ENCODE measurements at regions of chr6 and their contacts with region 1.

Region 1: GRCh38 chr6:134097114-134097707 is 44.8 kb upstream of the SLC2A12 start:
- DNase-seq: peak in 1 of 2 experiments; percentile 71
- H3K4me3 ChIP-seq: no peak overlapping the region
- H3K27ac ChIP-seq: no peak overlapping the region
- H3K4me1 ChIP-seq: no peaks in the 10 kb centered on the region
- H3K27me3 ChIP-seq: peaks cover 0 to under 1% (median 0%) of the 10 kb centered on the region in 4 experiments; a peak in 1 of 7 replicates
- CTCF ChIP-seq: peak in 2 of 3 experiments; percentile 63 to 69; a peak in 3 of 4 replicates
- EP300 ChIP-seq: no peak
- POLR2A ChIP-seq: no peak
- RAD21 ChIP-seq: peak; percentile 96 to 98

Region 2: DNA sequence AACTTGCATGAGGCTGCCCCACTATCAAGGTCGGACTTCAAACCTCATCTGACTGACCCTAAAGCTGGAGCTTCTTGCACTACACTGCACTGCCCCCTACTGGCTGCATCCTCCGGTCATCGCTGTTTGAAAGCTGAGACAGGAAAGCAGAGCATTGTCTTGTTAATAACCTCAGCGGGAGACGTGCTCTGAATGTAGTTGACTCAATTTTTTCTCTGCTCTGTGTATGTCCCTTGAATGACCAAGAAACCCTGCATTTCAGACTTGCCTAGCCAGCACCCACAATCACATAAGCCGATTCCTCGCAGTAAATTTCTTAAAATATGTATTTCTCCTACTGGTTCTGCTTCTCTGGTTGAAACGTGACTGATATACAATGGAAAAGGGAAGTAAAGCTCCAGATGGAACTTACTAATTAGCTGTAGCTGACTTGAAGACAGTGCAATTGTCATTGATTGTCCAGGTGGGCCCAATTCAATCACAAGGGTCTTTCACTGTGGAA is 180.5 kb before region 1 on chr6:
- CTCF ChIA-PET with region 1: interaction called, 374 read pairs
- POLR2A ChIA-PET with region 1: no interaction called
- DNase-seq: peak; percentile 96 to 99
- H3K4me3 ChIP-seq: peak overlapping the region in 3 of 4 experiments; percentile 4 to 46 (median 12); a peak in 4 of 8 replicates
- H3K27ac ChIP-seq: no peak overlapping the region; the same call in 1 of the 2 replicates
- H3K4me1 ChIP-seq: peaks cover 0 to 7% (median 3%) of the 10 kb centered on the region in 4 experiments; a peak in 6 of 7 replicates
- H3K27me3 ChIP-seq: no peaks in the 10 kb centered on the region
- CTCF ChIP-seq: peak; percentile 86 to 97 (median 87)
- EP300 ChIP-seq: no peak
- POLR2A ChIP-seq: no peak
- RAD21 ChIP-seq: peak; percentile 96 to 98

Region 3: GRCh38 chr6:133952815-133953633 is 144.2 kb before region 1 on chr6 and contains the start of gene TBPL1:
- CTCF ChIA-PET with region 1: interaction called, 20 read pairs
- POLR2A ChIA-PET with region 1: no interaction called
- DNase-seq: peak; percentile 86 to 93
- H3K4me3 ChIP-seq: peak within 1 kb of the TSS; percentile 81 to 92 (median 88)
- H3K27ac ChIP-seq: peak within 1 kb of the TSS; percentile 74; the same call in 1 of the 2 replicates
- H3K4me1 ChIP-seq: peaks cover 0 to 10% (median 3%) of the 10 kb centered on the region in 4 experiments; a peak in 6 of 7 replicates
- H3K27me3 ChIP-seq: no peaks in the 10 kb centered on the region; a peak in 1 of 7 replicates
- CTCF ChIP-seq: no peak
- EP300 ChIP-seq: peak in 1 of 2 experiments; percentile 52; a peak in 1 of 3 replicates
- POLR2A ChIP-seq: peak; percentile 57 to 93
- RAD21 ChIP-seq: no peak
- total RNA-seq, gene TBPL1: 66.3 and 67.0 TPM in 2 replicates

Region 4: DNA sequence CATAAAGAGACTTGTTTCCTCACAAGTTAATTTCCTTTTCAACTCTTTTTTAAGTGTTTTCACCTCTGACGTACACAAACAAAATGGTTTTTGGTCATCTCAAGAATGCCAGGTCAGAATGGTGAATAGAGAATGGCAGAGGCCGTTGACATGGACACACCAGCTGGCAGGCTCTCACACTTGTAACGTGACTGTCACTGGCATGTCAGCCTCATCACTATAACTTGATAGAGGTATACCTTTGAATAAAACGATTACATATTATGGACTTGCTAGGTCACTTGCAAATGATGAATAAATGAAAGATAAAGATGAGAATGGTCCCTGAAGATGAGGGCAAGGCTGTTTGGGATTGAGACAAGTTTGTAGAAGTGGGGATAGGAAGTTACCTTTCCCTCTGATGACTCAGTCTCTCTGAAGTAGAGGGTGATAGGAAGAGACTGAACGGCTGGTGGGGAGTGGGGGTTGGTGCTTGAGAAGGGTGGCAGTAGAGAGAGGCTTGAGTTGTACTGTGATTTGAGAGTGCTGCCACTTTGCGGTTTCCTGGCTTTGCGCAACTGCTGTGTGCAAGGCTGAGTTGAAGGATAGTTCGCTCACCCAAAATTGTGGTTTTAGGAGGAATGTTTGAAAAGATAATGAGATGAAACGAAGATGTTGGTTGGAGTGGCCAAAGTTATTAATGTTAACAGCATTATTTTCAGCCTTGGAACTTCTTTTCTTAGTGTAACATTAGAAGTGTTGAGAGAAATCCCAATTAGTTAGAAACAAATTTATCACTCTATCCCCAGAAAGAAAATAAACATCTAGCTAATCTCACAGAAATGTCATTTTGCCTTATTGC is 113.9 kb before region 1 on chr6:
- CTCF ChIA-PET with region 1: interaction called, 11 read pairs
- POLR2A ChIA-PET with region 1: no interaction called
- DNase-seq: no peak
- H3K4me3 ChIP-seq: no peak overlapping the region
- H3K27ac ChIP-seq: no peak overlapping the region
- H3K4me1 ChIP-seq: peaks cover 0 to 3% (median 0%) of the 10 kb centered on the region in 4 experiments; a peak in 2 of 7 replicates
- H3K27me3 ChIP-seq: no peaks in the 10 kb centered on the region
- CTCF ChIP-seq: no peak
- EP300 ChIP-seq: no peak
- POLR2A ChIP-seq: no peak
- RAD21 ChIP-seq: 0 out of 4 replicates have a peak, but pooled peaks of 1 of the 2 experiments have one; percentile 2

Region 5: GRCh38 chr6:134080171-134080795 is 16.9 kb before region 1 on chr6:
- CTCF ChIA-PET with region 1: interaction called, 31 read pairs
- POLR2A ChIA-PET with region 1: no interaction called
- DNase-seq: no peak
- H3K4me3 ChIP-seq: no peak overlapping the region
- H3K27ac ChIP-seq: no peak overlapping the region
- H3K4me1 ChIP-seq: no peaks in the 10 kb centered on the region
- H3K27me3 ChIP-seq: no peaks in the 10 kb centered on the region
- CTCF ChIP-seq: no peak
- EP300 ChIP-seq: no peak
- POLR2A ChIP-seq: no peak
- RAD21 ChIP-seq: no peak